ENCODE measurements at regions of chr1 and their contacts with region 1.

Region 1: GRCh38 chr1:222643938-222644635 is 26.2 kb downstream of the MIA3 start:
- DNase-seq: peak; percentile 98 to 99 (median 99)
- ATAC-seq: peak; percentile 100
- H3K4me3 ChIP-seq: peak overlapping the region; percentile 85
- H3K27ac ChIP-seq: peak overlapping the region; percentile 99
- H3K4me1 ChIP-seq: no peaks in the 10 kb centered on the region
- H3K27me3 ChIP-seq: no peaks in the 10 kb centered on the region

Region 2: GRCh38 chr1:222034790-222035189 is 609.3 kb before region 1 on chr1:
- intact Hi-C with region 1: no loop called
- DNase-seq: no peak
- ATAC-seq: peak; percentile 49 to 54
- H3K4me3 ChIP-seq: no peak overlapping the region
- H3K27ac ChIP-seq: peak overlapping the region; percentile 32
- H3K4me1 ChIP-seq: peaks cover 9% of the 10 kb centered on the region
- H3K27me3 ChIP-seq: no peaks in the 10 kb centered on the region

Region 3: GRCh38 chr1:222713091-222713961 is 69.2 kb after region 1 on chr1:
- intact Hi-C with region 1: loop called in 1 of 4 experiments (anchors 10 kb)
- DNase-seq: peak; percentile 93 to 98 (median 96)
- ATAC-seq: peak; percentile 90 to 92
- H3K4me3 ChIP-seq: peak overlapping the region; percentile 72
- H3K27ac ChIP-seq: peak overlapping the region; percentile 89
- H3K4me1 ChIP-seq: no peaks in the 10 kb centered on the region
- H3K27me3 ChIP-seq: no peaks in the 10 kb centered on the region

Measured in right cardiac atrium (tissue), 5 donors.